A549 (cell line): ENCODE measurements at regions of chr3 and their contacts with region 1.

Region 1: DNA sequence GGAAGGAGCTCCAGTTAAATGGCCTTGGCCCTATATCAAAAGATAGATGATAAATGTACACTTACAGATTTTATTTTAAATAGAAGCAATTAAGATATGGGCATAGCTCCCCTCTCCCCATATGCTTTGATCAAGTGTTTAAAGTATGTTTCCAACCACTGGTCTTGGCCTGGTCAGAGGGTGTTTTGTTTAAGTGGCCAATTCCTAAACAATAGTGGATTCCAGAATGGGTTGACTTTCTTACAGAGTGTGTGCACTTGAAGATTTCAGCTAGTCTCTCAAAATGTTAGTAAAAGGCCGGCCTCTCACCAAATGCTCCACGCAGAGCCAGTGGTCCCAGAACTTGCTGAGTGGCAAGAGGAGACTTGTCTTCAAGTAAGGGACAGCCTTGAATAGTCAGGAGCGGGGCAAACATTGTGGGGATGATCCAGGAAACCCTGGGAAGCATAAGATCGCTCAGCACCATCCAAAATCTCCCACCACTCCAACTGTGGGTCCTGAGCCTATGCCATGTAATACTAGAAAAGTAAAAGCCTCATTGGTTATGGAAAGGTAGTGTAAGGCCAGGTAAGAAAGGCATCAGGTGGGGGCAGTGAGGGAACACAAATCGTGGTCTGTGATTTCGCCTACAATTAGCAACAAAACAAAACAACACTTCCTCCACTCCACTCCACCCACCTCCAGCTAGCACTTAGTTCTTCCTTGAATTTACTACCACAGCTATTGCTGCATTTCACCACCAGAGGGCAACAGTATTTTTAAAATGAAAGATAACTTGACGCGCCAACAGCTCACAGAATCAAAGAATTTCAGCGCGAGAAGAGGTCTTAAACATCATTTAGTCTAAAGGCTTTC is 4.8 kb downstream of the RARRES1 start:
- DNase-seq: peak; percentile 79 to 80
- ATAC-seq: peak; percentile 11 to 17; a peak in 3 of 6 replicates
- H3K4me3 ChIP-seq: 0 out of 3 replicates have a peak overlapping the region, but pooled peaks have one; percentile 23
- H3K27ac ChIP-seq: peak overlapping the region; percentile 80 to 90; a peak in 5 of 6 replicates
- H3K4me1 ChIP-seq: peaks cover 69% of the 10 kb centered on the region
- CTCF ChIP-seq: peak; percentile 84
- EP300 ChIP-seq: no peak
- POLR2A ChIP-seq: no peak
- RAD21 ChIP-seq: peak; percentile 84

Region 2: DNA sequence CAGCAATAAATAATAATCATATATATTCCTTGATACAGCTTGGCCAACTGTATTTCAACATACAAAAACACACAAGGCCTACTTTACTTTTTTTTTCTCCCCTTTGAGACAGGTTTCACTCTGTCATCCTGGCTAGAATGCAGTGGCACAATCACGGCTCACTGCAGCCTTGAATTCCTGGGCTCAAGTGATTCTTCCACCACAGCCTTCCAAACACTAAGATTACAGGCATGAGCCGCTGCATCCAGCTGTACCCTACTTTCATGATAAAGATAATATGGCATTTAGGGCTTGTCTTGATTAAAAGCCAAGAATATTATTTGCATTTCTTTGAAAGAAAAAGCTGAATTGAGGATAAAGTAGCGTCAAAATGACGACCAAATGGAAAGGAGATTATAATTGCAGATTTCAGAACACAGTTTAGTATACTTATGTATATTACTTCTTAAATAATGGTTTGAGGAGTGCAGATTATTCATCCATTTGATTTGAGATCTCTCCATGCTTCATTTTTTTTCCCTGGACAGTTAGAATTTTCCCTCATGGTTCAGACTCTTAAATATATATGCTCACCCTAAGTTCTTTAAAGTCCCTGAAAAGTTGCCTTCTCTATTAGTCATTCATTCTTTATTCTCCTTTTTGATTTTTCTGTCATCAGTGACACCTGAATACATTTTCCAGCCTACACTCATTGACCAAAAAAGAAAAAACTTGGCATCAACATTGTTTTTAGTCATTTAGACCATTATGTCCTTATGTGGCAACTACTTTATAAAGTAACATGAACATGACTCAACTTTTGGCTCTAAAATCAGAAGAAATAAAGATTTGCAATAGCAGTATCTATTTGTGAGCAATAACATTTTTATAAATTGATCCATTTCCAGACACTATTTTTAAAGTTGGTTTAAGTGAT is 205.0 kb before region 1 on chr3:
- CTCF ChIA-PET with region 1: no interaction called
- POLR2A ChIA-PET with region 1: no interaction called
- DNase-seq: no peak
- ATAC-seq: no peak
- H3K4me3 ChIP-seq: no peak overlapping the region
- H3K27ac ChIP-seq: no peak overlapping the region
- H3K4me1 ChIP-seq: no peaks in the 10 kb centered on the region
- CTCF ChIP-seq: no peak
- EP300 ChIP-seq: no peak
- POLR2A ChIP-seq: no peak
- RAD21 ChIP-seq: no peak

Region 3: GRCh38 chr3:158644345-158644908 is 83.0 kb before region 1 on chr3 and contains the start of gene GFM1:
- CTCF ChIA-PET with region 1: interaction called, 15 read pairs
- POLR2A ChIA-PET with region 1: interaction called, 4 read pairs
- DNase-seq: peak; percentile 82 to 97
- ATAC-seq: peak; percentile 98 to 100
- H3K4me3 ChIP-seq: peak within 1 kb of the TSS; percentile 72
- H3K27ac ChIP-seq: peak within 1 kb of the TSS; percentile 87 to 99
- H3K4me1 ChIP-seq: peaks cover 14% of the 10 kb centered on the region
- CTCF ChIP-seq: peak; percentile 94
- EP300 ChIP-seq: no peak
- POLR2A ChIP-seq: peak; percentile 57; the same call in 1 of the 2 replicates
- RAD21 ChIP-seq: peak; percentile 49 to 53
- polyA plus RNA-seq, gene GFM1: 54.5 and 71.4 TPM in 2 replicates

Region 4: GRCh38 chr3:158659454-158660237 is 67.8 kb before region 1 on chr3:
- CTCF ChIA-PET with region 1: interaction called, 21 read pairs
- POLR2A ChIA-PET with region 1: no interaction called
- DNase-seq: peak; percentile 60 to 73
- ATAC-seq: peak; percentile 87 to 89
- H3K4me3 ChIP-seq: no peak overlapping the region
- H3K27ac ChIP-seq: peak overlapping the region in 1 of 2 experiments; percentile 31; a peak in 1 of 6 replicates
- H3K4me1 ChIP-seq: peaks cover 28% of the 10 kb centered on the region
- CTCF ChIP-seq: peak; percentile 68
- EP300 ChIP-seq: no peak
- POLR2A ChIP-seq: no peak
- RAD21 ChIP-seq: peak; percentile 56

Region 5: DNA sequence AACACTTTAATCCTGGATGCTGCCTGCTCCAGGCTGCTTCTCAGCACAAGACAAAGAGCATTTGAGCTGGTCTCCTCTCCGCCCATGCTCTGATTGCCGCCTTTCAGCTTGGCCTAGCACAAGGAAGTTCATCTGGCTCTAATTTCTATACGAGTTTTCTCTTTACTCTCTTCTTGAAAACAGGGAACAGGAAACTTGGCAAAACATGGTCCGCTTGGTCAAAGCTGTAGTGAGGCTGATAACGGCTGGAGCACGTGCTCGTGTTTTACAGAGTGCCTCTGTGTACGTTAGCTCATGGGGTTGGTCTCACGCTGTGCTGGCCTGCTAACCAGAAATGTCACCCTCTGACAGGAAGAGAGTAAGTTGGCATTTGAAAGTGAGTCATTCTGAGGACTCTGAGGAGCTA is 14.3 kb before region 1 on chr3:
- CTCF ChIA-PET with region 1: interaction called, 71 read pairs
- POLR2A ChIA-PET with region 1: interaction called, 3 read pairs
- DNase-seq: no peak
- ATAC-seq: no peak
- H3K4me3 ChIP-seq: no peak overlapping the region
- H3K27ac ChIP-seq: peak overlapping the region in 1 of 2 experiments; percentile 74; a peak in 3 of 6 replicates
- H3K4me1 ChIP-seq: peaks cover 72% of the 10 kb centered on the region
- CTCF ChIP-seq: no peak
- EP300 ChIP-seq: no peak
- POLR2A ChIP-seq: no peak
- RAD21 ChIP-seq: no peak

Region 6: GRCh38 chr3:158742871-158743663 is 15.6 kb after region 1 on chr3:
- CTCF ChIA-PET with region 1: interaction called, 45 read pairs
- POLR2A ChIA-PET with region 1: no interaction called
- DNase-seq: no peak
- ATAC-seq: no peak
- H3K4me3 ChIP-seq: no peak overlapping the region
- H3K27ac ChIP-seq: 0 out of 6 replicates have a peak overlapping the region, but pooled peaks of 1 of the 2 experiments have one; percentile 38
- H3K4me1 ChIP-seq: peaks cover 26% of the 10 kb centered on the region
- CTCF ChIP-seq: no peak
- EP300 ChIP-seq: no peak
- POLR2A ChIP-seq: no peak
- RAD21 ChIP-seq: no peak

Region 7: DNA sequence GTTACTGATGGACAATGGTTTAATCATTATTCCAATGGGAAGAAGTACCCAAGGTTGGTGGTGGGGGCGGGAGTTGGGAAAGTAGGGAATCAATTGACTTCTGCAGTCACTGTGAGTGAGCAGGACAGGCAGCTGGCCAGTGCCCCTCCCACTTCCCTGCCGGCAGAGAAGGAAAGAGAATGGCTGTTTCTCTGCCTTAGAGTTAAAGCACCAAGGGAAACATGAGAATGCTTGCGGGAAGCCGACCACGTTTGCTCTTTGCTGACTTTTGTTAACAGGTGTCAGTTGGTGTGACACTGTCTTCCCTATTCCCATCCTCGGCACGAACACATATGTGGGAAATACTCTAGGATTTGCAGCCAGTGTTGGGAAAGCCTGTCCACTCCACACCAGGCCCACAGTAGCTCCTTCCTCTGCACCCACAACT is 40.9 kb after region 1 on chr3:
- CTCF ChIA-PET with region 1: interaction called, 17 read pairs
- POLR2A ChIA-PET with region 1: no interaction called
- DNase-seq: peak; percentile 35 to 62
- ATAC-seq: peak; percentile 79 to 86
- H3K4me3 ChIP-seq: no peak overlapping the region
- H3K27ac ChIP-seq: peak overlapping the region; percentile 75 to 89
- H3K4me1 ChIP-seq: peaks cover 72% of the 10 kb centered on the region
- CTCF ChIP-seq: no peak
- EP300 ChIP-seq: no peak
- POLR2A ChIP-seq: no peak
- RAD21 ChIP-seq: no peak

Region 8: DNA sequence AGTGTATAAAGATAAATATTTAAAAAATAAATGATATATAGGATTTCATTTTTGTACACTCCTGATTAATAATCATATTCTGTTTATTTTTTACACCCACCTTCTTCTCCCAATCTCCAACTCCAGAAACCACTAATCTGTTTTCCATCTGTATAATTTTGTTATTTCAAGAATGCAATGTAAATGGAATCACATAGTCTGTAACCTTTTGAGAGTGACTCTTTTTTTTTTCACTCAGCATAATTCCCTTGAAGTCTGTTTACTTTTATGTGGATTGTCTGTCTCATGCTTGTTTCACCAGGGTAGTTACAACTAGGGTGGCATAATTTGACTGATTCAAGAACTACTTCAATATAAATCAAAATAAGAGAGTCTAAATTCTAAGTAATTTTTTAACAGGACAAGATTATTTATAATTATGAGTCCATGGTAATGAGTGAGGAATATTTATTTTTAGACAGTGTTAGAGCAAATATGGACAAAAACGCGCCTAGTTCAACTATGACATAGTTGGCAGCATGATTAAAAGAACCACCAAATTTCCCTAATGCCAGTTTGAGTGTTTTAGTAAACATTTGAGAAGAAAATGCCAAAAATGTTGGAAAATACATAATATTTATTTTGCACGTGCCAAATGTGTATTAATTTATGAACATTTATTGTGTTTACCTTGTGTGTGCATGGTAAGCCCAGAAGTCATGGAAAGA is 55.0 kb after region 1 on chr3:
- CTCF ChIA-PET with region 1: interaction called, 15 read pairs
- POLR2A ChIA-PET with region 1: no interaction called
- DNase-seq: no peak
- ATAC-seq: no peak
- H3K4me3 ChIP-seq: no peak overlapping the region
- H3K27ac ChIP-seq: peak overlapping the region; percentile 33 to 58; a peak in 4 of 6 replicates
- H3K4me1 ChIP-seq: peaks cover 16% of the 10 kb centered on the region
- CTCF ChIP-seq: no peak
- EP300 ChIP-seq: no peak
- POLR2A ChIP-seq: no peak
- RAD21 ChIP-seq: no peak